Activated CD4-positive, alpha-beta memory T cell treated with anti-CD3 and anti-CD28 coated beads, Interleukin-2, amount 10 ng/mL, durations not matched to agents 7 days and 5 days (primary cell): ENCODE measurements at regions of chr15 and their contacts with region 1.

Region 1: GRCh38 chr15:40941528-40942336 is 11.5 kb upstream of the CHAC1 start:
- DNase-seq: peak; percentile 73
- H3K4me3 Mint-ChIP-seq: peak overlapping the region; percentile 80
- H3K27ac Mint-ChIP-seq: no peak overlapping the region
- H3K4me1 Mint-ChIP-seq: peaks cover 44% of the 10 kb centered on the region
- H3K27me3 Mint-ChIP-seq: peaks cover 4% of the 10 kb centered on the region

Region 2: GRCh38 chr15:40928821-40929659 is 12.7 kb before region 1 on chr15 and contains the start of gene DLL4:
- CTCF ChIA-PET with region 1: interaction called, 22 read pairs
- POLR2A ChIA-PET with region 1: interaction called, 10 read pairs
- DNase-seq: peak; percentile 42
- H3K4me3 Mint-ChIP-seq: peak within 1 kb of the TSS; percentile 50
- H3K27ac Mint-ChIP-seq: no peak within 1 kb of the TSS
- H3K4me1 Mint-ChIP-seq: peaks cover 47% of the 10 kb centered on the region
- H3K27me3 Mint-ChIP-seq: peaks cover 75% of the 10 kb centered on the region
- total RNA-seq, gene DLL4: not detected

Region 3: DNA sequence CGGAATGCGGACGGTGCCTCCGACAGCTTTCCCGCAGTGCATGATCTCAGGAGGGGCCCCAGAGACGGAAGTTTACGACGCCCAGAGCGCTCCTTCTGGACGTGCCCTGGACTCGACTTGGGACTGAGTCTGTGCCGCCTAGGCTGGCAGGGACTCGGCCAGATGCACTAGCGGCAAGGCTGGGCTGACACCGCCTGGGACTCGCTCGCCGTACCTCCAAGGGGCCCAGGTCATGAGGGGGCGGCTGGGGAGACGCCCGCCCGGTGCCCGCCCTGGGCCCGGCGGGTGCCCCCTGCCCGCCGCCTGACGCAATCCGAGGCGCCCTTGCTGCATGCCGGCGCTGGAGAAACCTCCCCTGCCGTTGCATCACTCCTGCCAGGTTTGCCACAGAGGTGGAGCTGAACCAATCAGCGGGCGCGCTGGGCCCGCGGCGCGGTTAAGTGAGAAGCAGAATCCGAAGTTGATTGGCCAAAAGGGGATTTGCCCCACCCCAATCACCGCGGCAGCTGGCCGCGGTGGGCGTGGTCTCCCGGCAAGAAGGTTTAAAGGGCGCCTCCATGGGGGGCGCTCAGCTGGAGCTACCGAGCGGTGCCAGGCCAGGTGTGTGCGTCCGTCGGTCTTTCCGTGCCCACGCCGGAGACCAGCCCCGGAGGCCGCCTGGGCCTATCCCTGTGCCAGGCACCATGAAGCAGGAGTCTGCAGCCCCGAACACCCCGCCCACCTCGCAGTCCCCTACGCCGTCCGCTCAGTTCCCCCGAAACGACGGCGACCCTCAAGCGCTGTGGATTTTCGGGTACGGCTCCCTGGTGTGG is 11.4 kb after region 1 on chr15 and contains the start of gene CHAC1:
- CTCF ChIA-PET with region 1: interaction called, 48 read pairs
- POLR2A ChIA-PET with region 1: interaction called, 50 read pairs
- DNase-seq: peak; percentile 98
- H3K4me3 Mint-ChIP-seq: peak within 1 kb of the TSS; percentile 88
- H3K27ac Mint-ChIP-seq: peak within 1 kb of the TSS; percentile 87
- H3K4me1 Mint-ChIP-seq: peaks cover 46% of the 10 kb centered on the region
- H3K27me3 Mint-ChIP-seq: peaks cover 2% of the 10 kb centered on the region
- total RNA-seq, gene CHAC1: 20.3 to 22.0 TPM

Region 4: DNA sequence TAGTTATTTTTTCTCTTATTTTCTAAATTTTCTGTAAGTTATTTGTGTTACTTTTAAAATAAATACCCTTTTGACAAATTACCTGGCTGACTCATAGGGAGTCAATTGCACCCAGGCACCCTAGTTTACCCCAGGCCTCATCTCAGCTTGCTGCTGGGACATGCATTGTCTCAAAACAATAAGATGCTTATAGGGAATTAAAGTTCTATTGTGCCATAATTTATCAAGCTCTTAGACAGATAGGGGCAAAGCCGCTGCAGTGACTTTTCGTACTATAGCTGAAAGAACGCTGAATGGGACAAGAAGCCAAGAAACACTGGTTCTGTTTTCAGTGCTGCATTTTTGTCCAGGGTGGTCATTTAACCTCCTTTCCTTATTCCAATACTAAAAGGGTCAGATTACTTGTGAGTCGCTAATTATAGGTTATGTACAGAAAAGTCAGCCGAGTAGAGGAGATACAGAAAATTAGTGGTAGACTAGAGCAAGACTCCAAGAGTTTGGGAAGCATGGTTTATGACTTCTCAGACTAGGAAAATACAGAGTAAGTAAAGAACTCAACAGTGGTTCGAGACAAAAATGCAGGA is 238.6 kb after region 1 on chr15:
- CTCF ChIA-PET with region 1: interaction called, 15 read pairs
- POLR2A ChIA-PET with region 1: no interaction called
- DNase-seq: no peak
- H3K4me3 Mint-ChIP-seq: no peak overlapping the region
- H3K27ac Mint-ChIP-seq: no peak overlapping the region
- H3K4me1 Mint-ChIP-seq: no peaks in the 10 kb centered on the region
- H3K27me3 Mint-ChIP-seq: no peaks in the 10 kb centered on the region

Region 5: DNA sequence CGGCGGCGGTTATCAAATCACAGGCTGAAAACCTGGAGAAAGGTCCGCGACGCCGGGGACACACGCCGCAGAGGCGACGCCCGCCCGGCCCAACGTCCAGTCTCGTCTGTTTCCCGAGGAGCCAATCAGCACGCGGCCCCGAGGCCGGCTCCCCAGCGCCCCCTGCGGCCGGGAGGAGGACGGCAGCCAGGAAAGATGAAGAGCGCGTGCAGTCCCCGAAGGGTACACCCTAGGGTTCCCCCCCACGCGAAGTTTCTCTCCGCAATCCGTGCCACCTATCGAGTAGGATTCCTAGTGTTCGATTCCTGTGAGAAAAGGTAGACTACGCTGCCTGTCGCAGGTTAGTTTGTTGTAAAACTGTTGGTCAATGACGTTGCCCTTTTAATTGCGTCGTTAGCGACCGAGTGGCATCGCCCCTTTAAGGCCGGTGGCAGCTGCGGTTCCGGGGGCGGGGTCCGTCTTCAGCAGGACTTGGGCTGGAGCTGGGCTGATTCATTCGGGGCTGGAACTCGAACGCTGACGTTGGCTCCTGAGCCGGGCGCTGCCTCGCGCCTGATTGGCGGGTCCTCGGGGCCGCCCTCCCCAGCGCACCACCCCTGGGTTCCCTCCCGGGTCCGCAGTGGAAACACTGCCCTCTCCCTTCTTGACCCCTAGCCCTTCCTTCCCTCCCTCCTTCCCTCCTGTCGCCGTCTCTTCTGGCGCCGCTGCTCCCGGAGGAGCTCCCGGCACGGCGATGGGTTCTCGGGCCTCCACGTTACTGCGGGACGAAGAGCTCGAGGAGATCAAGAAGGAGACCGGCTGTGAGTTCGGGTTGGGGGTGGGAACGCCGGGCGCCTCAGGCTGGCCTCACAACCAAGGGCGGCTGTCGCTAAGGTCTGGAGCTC is 289.2 kb after region 1 on chr15 and contains the starts of genes CHP1 and EXD1:
- CTCF ChIA-PET with region 1: interaction called, 11 read pairs
- POLR2A ChIA-PET with region 1: no interaction called
- DNase-seq: peak; percentile 97
- H3K4me3 Mint-ChIP-seq: peak within 1 kb of the TSS; percentile 84
- H3K27ac Mint-ChIP-seq: peak within 1 kb of the TSS; percentile 72
- H3K4me1 Mint-ChIP-seq: peaks cover 31% of the 10 kb centered on the region
- H3K27me3 Mint-ChIP-seq: peaks cover 5% of the 10 kb centered on the region
- total RNA-seq, gene CHP1: 60.1 to 68.9 TPM
- total RNA-seq, gene EXD1: not detected